ENCODE measurements at regions of chrX and their contacts with region 1.

Region 1: DNA sequence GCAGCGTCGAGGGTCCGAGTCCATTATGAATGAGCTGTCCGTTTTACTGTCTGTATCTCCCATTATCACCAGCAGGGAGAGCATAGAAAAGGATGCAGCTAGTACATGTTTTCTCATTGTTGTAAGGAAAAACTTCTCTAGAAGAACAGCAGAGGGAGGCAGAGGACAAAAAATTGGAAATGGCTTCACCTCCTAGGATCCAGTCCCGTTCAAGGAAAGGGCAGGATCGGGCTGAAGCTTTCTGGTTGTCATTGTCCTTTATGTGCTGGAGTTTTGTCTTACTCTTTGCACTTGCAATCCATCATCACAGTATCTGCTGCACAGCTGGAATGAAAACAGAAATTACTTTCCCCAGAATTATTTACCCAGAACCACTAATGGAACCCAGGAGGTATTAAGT is 14.7 kb downstream of the NDP start:
- DNase-seq: peak; percentile 44 to 56
- H3K4me3 ChIP-seq: no peak overlapping the region
- H3K4me3 Mint-ChIP-seq: no peak overlapping the region
- H3K27ac Mint-ChIP-seq: no peak overlapping the region
- H3K4me1 ChIP-seq: no peaks in the 10 kb centered on the region
- H3K4me1 Mint-ChIP-seq: no peaks in the 10 kb centered on the region
- H3K27me3 ChIP-seq: no peaks in the 10 kb centered on the region
- H3K27me3 Mint-ChIP-seq: peaks cover 3% of the 10 kb centered on the region
- CTCF ChIP-seq: peak; percentile 44 to 67

Region 2: DNA sequence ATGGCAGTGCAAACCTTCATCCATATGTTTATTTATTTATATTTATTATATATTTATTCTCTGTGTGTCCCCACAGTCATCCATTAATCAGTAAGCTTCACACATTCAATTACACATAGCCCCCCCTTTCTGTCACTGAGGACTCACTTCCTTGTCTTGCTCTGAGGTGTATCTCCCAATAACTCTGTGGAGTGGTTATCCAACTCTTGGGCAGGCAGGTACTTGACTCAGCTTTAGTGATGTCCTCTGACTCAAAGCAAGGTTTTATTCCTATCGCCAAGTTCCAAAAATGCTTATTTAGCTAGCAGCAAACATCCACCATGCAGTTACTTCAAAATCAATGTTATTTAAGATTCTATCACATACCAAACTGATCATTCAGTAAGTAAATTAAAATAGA is 39.8 kb after region 1 on chrX:
- CTCF ChIA-PET with region 1: no interaction called
- POLR2A ChIA-PET with region 1: no interaction called
- intact Hi-C with region 1: no loop called
- DNase-seq: no peak
- H3K4me3 ChIP-seq: no peak overlapping the region
- H3K4me3 Mint-ChIP-seq: no peak overlapping the region
- H3K27ac Mint-ChIP-seq: no peak overlapping the region
- H3K4me1 ChIP-seq: no peaks in the 10 kb centered on the region
- H3K4me1 Mint-ChIP-seq: no peaks in the 10 kb centered on the region
- H3K27me3 ChIP-seq: no peaks in the 10 kb centered on the region
- H3K27me3 Mint-ChIP-seq: no peaks in the 10 kb centered on the region
- CTCF ChIP-seq: no peak

Region 3: GRCh38 chrX:44025555-44025954 is 67.0 kb after region 1 on chrX:
- CTCF ChIA-PET with region 1: interaction called, 4 read pairs
- POLR2A ChIA-PET with region 1: no interaction called
- intact Hi-C with region 1: loop called (anchors 2 kb)
- DNase-seq: no peak
- H3K4me3 ChIP-seq: no peak overlapping the region
- H3K4me3 Mint-ChIP-seq: no peak overlapping the region
- H3K27ac Mint-ChIP-seq: no peak overlapping the region
- H3K4me1 ChIP-seq: no peaks in the 10 kb centered on the region
- H3K4me1 Mint-ChIP-seq: no peaks in the 10 kb centered on the region
- H3K27me3 ChIP-seq: no peaks in the 10 kb centered on the region
- H3K27me3 Mint-ChIP-seq: peaks cover 3% of the 10 kb centered on the region
- CTCF ChIP-seq: no peak

Region 4: GRCh38 chrX:44080083-44080482 is 121.6 kb after region 1 on chrX:
- CTCF ChIA-PET with region 1: no interaction called
- POLR2A ChIA-PET with region 1: no interaction called
- intact Hi-C with region 1: no loop called
- DNase-seq: no peak
- H3K4me3 ChIP-seq: no peak overlapping the region
- H3K4me3 Mint-ChIP-seq: no peak overlapping the region
- H3K27ac Mint-ChIP-seq: no peak overlapping the region
- H3K4me1 ChIP-seq: no peaks in the 10 kb centered on the region
- H3K4me1 Mint-ChIP-seq: no peaks in the 10 kb centered on the region
- H3K27me3 ChIP-seq: no peaks in the 10 kb centered on the region
- H3K27me3 Mint-ChIP-seq: no peaks in the 10 kb centered on the region
- CTCF ChIP-seq: no peak

Region 5: GRCh38 chrX:44203791-44204190 is 245.3 kb after region 1 on chrX:
- CTCF ChIA-PET with region 1: interaction called, 3 read pairs
- POLR2A ChIA-PET with region 1: no interaction called
- intact Hi-C with region 1: loop called (anchors 1 kb)
- DNase-seq: peak in 1 of 2 experiments; percentile 2
- H3K4me3 ChIP-seq: no peak overlapping the region
- H3K4me3 Mint-ChIP-seq: no peak overlapping the region
- H3K27ac Mint-ChIP-seq: no peak overlapping the region
- H3K4me1 ChIP-seq: no peaks in the 10 kb centered on the region
- H3K4me1 Mint-ChIP-seq: no peaks in the 10 kb centered on the region
- H3K27me3 ChIP-seq: no peaks in the 10 kb centered on the region
- H3K27me3 Mint-ChIP-seq: no peaks in the 10 kb centered on the region
- CTCF ChIP-seq: peak; percentile 25 to 30

Region 6: DNA sequence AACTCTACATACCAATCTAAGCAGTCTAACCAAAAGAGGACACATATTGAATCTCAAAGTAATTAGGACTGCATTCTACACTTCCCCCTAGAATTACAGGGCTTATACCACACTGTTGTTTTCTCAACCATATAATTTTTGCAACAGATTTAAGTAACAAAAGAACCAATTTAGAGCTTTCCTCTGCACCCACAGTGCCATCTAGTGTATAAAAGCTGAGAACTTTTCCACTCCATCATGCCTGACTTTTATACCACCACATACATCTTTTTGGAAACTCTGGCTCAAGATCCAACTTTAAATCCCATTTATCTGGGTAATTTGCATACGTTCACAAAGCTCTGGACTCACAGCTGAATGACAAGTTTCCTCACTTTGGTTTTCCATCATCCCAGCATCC is 285.5 kb after region 1 on chrX:
- CTCF ChIA-PET with region 1: interaction called, 32 read pairs
- POLR2A ChIA-PET with region 1: no interaction called
- intact Hi-C with region 1: loop called (anchors 1 kb)
- DNase-seq: peak in 1 of 2 experiments; percentile 13
- H3K4me3 ChIP-seq: no peak overlapping the region
- H3K4me3 Mint-ChIP-seq: no peak overlapping the region
- H3K27ac Mint-ChIP-seq: no peak overlapping the region
- H3K4me1 ChIP-seq: no peaks in the 10 kb centered on the region
- H3K4me1 Mint-ChIP-seq: peaks cover 7% of the 10 kb centered on the region
- H3K27me3 ChIP-seq: no peaks in the 10 kb centered on the region
- H3K27me3 Mint-ChIP-seq: peaks cover 3% of the 10 kb centered on the region
- CTCF ChIP-seq: peak; percentile 16 to 23

Region 7: GRCh38 chrX:44705817-44706551 is 747.5 kb after region 1 on chrX:
- CTCF ChIA-PET with region 1: no interaction called
- POLR2A ChIA-PET with region 1: no interaction called
- intact Hi-C with region 1: no loop called
- DNase-seq: peak; percentile 85 to 90
- H3K4me3 ChIP-seq: no peak overlapping the region
- H3K4me3 Mint-ChIP-seq: peak overlapping the region; percentile 63
- H3K27ac Mint-ChIP-seq: peak overlapping the region; percentile 90
- H3K4me1 ChIP-seq: peaks cover 16% of the 10 kb centered on the region
- H3K4me1 Mint-ChIP-seq: no peaks in the 10 kb centered on the region
- H3K27me3 ChIP-seq: no peaks in the 10 kb centered on the region
- H3K27me3 Mint-ChIP-seq: no peaks in the 10 kb centered on the region
- CTCF ChIP-seq: no peak

Measured in Caco-2 (cell line).